ENCODE measurements at regions of chr2 and their contacts with region 1.

Region 1: GRCh38 chr2:72150157-72150865 is 2.6 kb upstream of the CYP26B1 start:
- DNase-seq: peak; percentile 64 to 90
- H3K4me3 ChIP-seq: no peak overlapping the region
- H3K4me1 ChIP-seq: peaks cover 5% of the 10 kb centered on the region
- H3K27me3 ChIP-seq: peaks cover 12% of the 10 kb centered on the region

Region 2: DNA sequence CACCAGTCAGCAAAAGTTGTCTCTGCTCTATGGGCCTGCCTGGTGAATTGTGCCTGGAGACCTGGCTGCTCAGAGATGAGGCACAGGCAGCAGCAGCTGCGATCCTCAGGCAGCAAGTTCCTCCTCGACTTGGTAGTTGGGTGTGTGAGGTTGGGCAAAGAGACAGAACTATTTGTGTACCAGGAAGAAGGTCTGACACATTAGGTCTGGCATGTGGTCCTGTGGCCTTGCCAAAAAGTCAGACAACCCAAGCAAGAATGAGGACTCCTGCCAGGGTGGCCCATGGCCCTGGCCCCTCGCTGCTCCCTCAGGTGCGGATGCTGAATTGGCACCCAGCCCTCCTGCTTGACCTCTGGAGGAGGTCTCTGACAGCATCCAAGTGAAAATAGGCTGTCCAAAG is 504.3 kb before region 1 on chr2:
- in situ Hi-C with region 1: no loop called
- DNase-seq: no peak
- H3K4me3 ChIP-seq: no peak overlapping the region
- H3K4me1 ChIP-seq: no peaks in the 10 kb centered on the region
- H3K27me3 ChIP-seq: no peaks in the 10 kb centered on the region

Region 3: DNA sequence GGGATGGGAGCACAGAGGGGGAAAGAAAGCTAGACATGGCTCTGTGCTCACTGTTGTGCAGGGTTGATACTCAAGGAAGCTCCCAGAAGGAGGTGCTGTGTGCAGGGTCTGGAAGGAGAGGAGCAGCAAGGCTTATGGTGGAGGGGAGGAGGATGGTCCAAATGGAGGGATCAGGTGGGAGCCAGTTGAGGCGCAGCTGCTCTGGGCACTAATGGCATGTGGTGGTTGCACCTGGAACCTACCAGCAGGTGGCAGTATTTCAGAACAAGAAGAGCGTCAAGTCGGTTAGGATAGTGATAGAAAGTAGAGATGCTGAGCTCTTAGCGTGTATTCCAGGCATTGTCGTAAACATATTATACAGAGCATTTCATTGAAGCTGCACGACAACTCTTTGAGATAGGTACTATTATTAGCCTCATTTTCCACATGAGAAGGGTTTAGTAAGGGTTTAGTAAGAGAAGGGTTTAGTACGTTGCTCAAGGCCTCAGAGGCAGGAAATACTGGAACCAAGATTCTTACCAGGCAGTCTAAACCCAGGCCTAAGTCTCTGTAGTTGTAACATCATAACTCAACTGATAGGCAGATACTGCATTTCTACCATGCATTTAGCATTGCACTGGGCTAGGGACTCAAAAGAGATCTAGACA is 226.3 kb before region 1 on chr2:
- in situ Hi-C with region 1: loop called (anchors 5 kb)
- DNase-seq: peak; percentile 72 to 80
- H3K4me3 ChIP-seq: no peak overlapping the region
- H3K4me1 ChIP-seq: no peaks in the 10 kb centered on the region
- H3K27me3 ChIP-seq: no peaks in the 10 kb centered on the region